ENCODE measurements at regions of chr15 and their contacts with region 1.

Region 1: GRCh38 chr15:52256366-52256765 is 39.2 kb downstream of the MYO5C start:
- DNase-seq: peak; percentile 87
- H3K4me3 Mint-ChIP-seq: peak overlapping the region; percentile 52
- H3K27ac Mint-ChIP-seq: no peak overlapping the region
- H3K4me1 Mint-ChIP-seq: peaks cover 18% of the 10 kb centered on the region
- H3K27me3 Mint-ChIP-seq: no peaks in the 10 kb centered on the region

Region 2: DNA sequence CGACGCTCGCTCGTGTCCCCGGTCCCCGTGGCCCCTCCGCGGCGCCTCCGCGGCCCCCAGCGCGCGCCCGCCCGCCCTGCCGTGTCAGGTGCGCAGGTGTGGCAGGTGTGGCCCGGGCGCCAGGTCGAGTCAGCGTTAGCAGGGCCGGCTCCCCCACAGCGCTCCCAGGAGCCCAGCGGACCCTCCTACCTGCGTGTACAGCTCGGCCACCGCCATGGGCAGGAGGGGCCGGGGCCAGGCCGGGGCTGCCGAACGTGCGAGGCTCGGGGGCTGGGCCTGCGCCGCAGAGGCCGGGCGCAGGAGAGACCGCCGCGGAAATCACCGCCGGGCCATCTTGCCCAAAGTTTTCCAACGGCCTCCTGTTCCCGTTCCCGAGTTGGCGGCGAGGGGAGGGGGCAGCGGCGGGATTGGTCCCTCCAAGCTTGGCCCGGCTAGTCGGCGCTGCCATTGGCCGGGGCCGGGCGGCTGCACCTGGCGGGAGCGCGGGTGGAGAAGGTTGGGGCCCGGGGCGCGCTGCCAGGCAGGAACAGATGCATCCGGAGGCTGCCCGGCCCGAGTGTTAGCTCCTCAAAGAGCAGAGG is 39.1 kb after region 1 on chr15 and contains the start of gene MYO5C:
- CTCF ChIA-PET with region 1: interaction called, 6 read pairs
- intact Hi-C with region 1: loop called (anchors 2 kb)
- DNase-seq: peak; percentile 19
- H3K4me3 Mint-ChIP-seq: peak within 1 kb of the TSS; percentile 27
- H3K27ac Mint-ChIP-seq: no peak within 1 kb of the TSS
- H3K4me1 Mint-ChIP-seq: no peaks in the 10 kb centered on the region
- H3K27me3 Mint-ChIP-seq: peaks cover 26% of the 10 kb centered on the region
- total RNA-seq, gene MYO5C: 0.19 to 0.25 TPM

Region 3: GRCh38 chr15:52528991-52529926 is 272.9 kb after region 1 on chr15:
- CTCF ChIA-PET with region 1: interaction called, 3 read pairs
- intact Hi-C with region 1: loop called (anchors 1 kb)
- DNase-seq: peak; percentile 81
- H3K4me3 Mint-ChIP-seq: peak overlapping the region; percentile 74
- H3K27ac Mint-ChIP-seq: peak overlapping the region; percentile 47
- H3K4me1 Mint-ChIP-seq: peaks cover 13% of the 10 kb centered on the region
- H3K27me3 Mint-ChIP-seq: no peaks in the 10 kb centered on the region

Region 4: DNA sequence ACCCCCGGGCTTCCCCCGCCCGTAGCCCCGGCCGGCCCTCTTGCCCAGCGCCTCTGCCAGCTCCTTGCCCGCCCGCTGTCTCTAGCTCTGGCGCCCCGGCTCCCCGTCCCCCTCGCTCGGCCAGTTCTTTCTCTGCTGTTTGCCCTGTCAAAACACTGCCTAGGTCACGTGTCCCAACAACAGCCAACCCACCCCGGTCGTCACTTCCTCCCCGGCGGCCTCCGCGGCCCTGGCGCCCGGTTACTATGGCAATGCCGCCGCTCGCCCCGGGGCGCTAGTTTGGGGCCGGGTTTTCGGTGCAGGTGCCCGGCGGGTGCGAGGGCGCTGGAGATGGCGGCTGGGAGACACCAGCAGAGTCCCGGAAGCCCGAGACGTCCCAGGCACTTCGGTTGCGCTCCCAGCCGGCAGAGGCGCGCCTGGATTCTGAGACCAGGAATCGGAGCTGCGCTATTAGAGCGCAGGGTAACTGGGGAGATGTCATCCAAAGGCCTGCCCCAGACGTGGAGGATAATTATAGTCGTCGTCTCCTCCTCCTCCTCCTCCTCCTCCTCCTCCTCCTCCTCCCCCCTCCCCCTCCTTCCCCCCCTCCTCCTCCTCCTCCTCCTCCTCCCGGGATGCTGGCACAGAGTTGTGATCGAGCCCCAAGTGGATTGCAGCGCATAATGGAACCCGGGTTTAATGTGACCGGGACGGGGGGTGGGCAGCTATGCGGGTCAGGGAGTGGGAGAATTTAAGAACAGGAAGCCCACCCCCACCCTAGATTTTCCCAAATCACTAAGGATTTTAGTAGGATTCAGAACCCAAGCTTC is 423.1 kb after region 1 on chr15 and contains the start of gene ATOSA:
- CTCF ChIA-PET with region 1: interaction called, 10 read pairs
- intact Hi-C with region 1: no loop called
- DNase-seq: peak; percentile 93
- H3K4me3 Mint-ChIP-seq: peak within 1 kb of the TSS; percentile 100
- H3K27ac Mint-ChIP-seq: peak within 1 kb of the TSS; percentile 98
- H3K4me1 Mint-ChIP-seq: peaks cover 39% of the 10 kb centered on the region
- H3K27me3 Mint-ChIP-seq: no peaks in the 10 kb centered on the region
- total RNA-seq, gene ATOSA: 19.4 to 21.7 TPM

Region 5: GRCh38 chr15:52735231-52736089 is 479.1 kb after region 1 on chr15:
- CTCF ChIA-PET with region 1: interaction called, 48 read pairs
- intact Hi-C with region 1: loop called (anchors 1 kb)
- DNase-seq: peak; percentile 84
- H3K4me3 Mint-ChIP-seq: no peak overlapping the region
- H3K27ac Mint-ChIP-seq: no peak overlapping the region
- H3K4me1 Mint-ChIP-seq: peaks cover 11% of the 10 kb centered on the region
- H3K27me3 Mint-ChIP-seq: no peaks in the 10 kb centered on the region

Measured in activated naive CD4-positive, alpha-beta T cell treated with anti-CD3 and anti-CD28 coated beads for 36 hours (primary cell).